Mammary epithelial cell (primary cell): ENCODE measurements at regions of chr6 and their contacts with region 1.

Region 1: GRCh38 chr6:53598265-53598907 is 53.5 kb upstream of the GCLC start:
- DNase-seq: no peak
- H3K4me3 ChIP-seq: no peak overlapping the region
- H3K27ac ChIP-seq: no peak overlapping the region
- H3K4me1 ChIP-seq: peaks cover 8% of the 10 kb centered on the region
- H3K27me3 ChIP-seq: no peaks in the 10 kb centered on the region
- CTCF ChIP-seq: no peak

Region 2: DNA sequence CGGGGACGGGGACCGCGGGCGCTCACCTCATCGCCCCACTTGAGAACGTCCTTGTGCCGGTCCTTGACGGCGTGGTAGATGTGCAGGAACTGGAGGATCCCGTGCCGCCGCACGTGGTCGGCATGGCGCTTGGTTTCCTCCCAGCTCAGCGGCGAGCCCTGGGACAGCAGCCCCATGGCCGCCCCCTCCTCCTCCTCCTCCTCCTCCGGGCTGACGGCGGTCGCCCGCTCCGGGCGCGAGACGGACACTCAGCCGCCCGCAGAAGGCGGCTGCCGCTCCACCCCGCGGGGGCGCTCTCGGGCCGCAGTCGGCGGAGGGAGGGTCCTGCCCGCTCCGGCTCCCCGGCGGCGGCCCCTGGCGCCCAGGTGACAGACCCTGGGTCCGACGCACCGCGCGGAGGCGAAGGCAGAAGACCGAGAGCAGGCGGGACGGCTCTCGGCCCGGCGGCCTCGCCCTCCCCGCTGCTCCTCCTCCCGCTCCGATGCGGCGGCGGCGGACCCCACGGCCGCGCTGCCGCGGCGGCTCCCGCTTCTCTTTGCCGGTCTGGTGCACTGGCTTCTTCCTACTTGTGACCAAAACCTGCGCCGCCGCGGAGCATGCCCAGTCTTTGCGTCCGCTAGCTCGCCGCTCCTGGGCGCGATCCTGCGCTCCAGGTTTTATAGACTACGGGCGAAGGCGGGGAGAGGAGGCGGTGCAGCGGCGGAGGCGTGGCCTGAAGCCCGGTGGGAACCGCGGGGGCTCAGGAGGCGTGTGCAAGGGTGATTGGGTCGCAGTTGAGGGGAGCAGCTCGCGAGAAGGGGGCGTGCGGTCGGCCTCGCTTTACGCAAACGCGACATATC is 53.7 kb before region 1 on chr6 and contains the start of gene GCLC:
- CTCF ChIA-PET with region 1: no interaction called
- dilution Hi-C with region 1: no loop called
- in situ Hi-C with region 1: no loop called
- intact Hi-C with region 1: no loop called
- DNase-seq: peak; percentile 94
- H3K4me3 ChIP-seq: peak within 1 kb of the TSS; percentile 73 to 87 (median 79)
- H3K27ac ChIP-seq: peak within 1 kb of the TSS; percentile 85
- H3K4me1 ChIP-seq: peaks cover 23% of the 10 kb centered on the region
- H3K27me3 ChIP-seq: no peaks in the 10 kb centered on the region
- CTCF ChIP-seq: peak; percentile 26 to 55
- total RNA-seq, gene GCLC: 94.7 to 128 TPM

Region 3: GRCh38 chr6:53565886-53566285 is 32.5 kb before region 1 on chr6:
- CTCF ChIA-PET with region 1: no interaction called
- dilution Hi-C with region 1: loop called (anchors 5 kb)
- in situ Hi-C with region 1: no loop called
- intact Hi-C with region 1: no loop called
- DNase-seq: peak; percentile 62
- H3K4me3 ChIP-seq: no peak overlapping the region
- H3K27ac ChIP-seq: no peak overlapping the region
- H3K4me1 ChIP-seq: no peaks in the 10 kb centered on the region
- H3K27me3 ChIP-seq: no peaks in the 10 kb centered on the region
- CTCF ChIP-seq: no peak